Activated CD8-positive, alpha-beta T cell treated with anti-CD3 and anti-CD28 coated beads for 36 hours (primary cell): ENCODE measurements at regions of chr7 and their contacts with region 1.

Region 1: DNA sequence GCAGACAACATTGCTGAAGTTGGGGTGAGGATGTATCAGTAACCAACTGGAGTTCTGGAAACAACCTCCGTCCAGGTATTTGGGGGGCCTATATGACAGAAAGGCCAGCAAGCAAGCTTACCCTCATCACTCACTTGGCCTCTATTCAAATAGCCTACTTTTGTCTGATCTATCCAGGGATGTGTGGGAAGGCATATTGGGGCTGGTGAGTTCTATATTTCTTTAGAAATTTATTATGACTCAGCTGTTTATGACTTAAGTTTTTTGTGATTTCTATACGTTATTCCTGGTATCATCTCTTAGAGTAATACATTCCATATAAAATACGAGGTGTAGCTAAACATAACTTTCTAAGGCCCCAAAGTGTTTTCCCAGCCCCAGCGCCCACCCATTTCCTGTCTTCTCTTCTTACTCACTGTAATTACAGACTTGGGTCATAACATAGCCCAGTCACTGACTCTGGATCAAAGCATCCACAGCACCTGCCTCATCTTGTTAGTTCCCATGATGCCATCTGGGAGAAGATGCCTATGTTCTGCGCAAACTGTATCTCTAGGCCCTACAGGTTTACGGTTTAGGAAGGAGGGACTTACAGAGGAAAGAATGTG is 18.1 kb downstream of the GARS1 start:
- DNase-seq: peak; percentile 44
- ATAC-seq: peak; percentile 64
- H3K4me3 Mint-ChIP-seq: no peak overlapping the region
- H3K27ac Mint-ChIP-seq: peak overlapping the region; percentile 69
- H3K4me1 Mint-ChIP-seq: peaks cover 39% of the 10 kb centered on the region
- H3K27me3 Mint-ChIP-seq: no peaks in the 10 kb centered on the region
- CTCF ChIP-seq: no peak

Region 2: DNA sequence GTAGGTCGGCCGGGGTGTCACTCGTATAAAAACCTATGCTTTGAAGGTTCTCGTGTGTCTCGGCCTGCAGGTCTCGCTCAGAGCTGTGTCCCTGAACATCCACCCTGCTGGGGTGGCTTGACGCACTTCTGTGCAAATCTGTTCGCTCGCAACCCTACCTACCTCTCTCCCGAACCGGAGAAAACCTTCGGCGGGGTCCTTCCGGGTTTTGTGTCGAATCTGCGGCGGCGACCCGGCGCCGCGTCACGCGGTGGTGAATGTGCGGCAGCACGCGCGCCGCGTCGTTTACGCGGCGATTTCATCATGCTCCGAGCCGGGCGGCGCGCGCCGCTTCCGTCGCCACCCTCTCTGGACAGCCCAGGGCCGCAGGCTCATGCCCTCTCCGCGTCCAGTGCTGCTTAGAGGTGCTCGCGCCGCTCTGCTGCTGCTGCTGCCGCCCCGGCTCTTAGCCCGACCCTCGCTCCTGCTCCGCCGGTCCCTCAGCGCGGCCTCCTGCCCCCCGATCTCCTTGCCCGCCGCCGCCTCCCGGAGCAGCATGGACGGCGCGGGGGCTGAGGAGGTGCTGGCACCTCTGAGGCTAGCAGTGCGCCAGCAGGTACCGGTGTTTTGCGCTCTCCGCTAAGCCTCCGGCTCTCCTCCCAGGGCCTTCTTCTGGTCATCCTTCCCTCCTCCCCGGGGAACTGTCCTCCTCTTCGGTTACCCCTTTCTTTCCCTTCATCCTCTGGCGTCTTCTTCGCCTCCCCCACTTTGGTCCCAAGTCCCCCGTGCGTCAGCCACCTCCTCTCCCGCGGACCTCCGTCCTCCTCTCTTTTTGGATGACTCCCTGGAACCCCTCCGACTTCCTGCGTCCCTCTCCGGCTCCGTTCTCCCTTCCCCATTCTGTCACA is 18.0 kb before region 1 on chr7 and contains the start of gene GARS1:
- CTCF ChIA-PET with region 1: interaction called, 3 read pairs
- POLR2A ChIA-PET with region 1: interaction called, 10 read pairs
- intact Hi-C with region 1: no loop called
- DNase-seq: peak; percentile 91
- ATAC-seq: peak; percentile 87
- H3K4me3 Mint-ChIP-seq: peak within 1 kb of the TSS; percentile 98
- H3K27ac Mint-ChIP-seq: peak within 1 kb of the TSS; percentile 97
- H3K4me1 Mint-ChIP-seq: peaks cover 48% of the 10 kb centered on the region
- H3K27me3 Mint-ChIP-seq: no peaks in the 10 kb centered on the region
- CTCF ChIP-seq: no peak
- total RNA-seq, gene GARS1: 338 to 354 TPM